PC-9 (cell line): ENCODE measurements at regions of chr2 and their contacts with region 1.

Region 1: DNA sequence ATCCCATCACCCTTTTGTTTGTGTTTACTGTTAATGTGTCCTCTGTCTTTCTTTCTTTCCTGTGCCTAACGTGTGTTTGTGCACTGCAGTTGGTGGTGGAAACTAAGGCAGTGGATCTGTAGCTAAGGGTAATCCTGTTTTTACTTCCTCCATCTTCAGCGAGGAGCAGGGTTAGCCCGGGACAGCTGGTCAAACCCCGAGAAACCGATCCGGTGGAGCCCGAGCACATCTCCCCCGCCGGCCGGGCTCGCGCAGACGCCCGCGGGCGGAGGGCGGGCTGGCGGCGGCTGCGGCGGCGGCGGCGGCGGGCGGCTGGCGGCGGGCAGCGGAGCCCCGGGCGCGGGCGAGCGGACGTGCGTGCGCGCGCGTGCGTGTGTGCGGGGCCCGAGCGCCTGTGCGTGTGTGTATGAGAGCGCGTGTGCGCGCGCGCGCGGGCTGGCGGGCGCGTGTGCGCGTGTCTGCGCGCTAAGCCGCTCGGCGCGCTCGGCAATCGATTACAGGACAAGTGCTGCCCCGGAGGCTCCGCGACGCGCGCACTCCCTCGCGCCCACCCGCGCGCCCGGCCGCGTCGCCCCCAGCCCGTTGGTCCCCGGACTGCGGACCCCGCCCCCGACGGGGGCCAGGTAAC is at the start of gene IKZF2:
- DNase-seq: peak; percentile 45 to 61
- H3K4me3 ChIP-seq: peak within 1 kb of the TSS; percentile 83
- H3K27ac ChIP-seq: peak within 1 kb of the TSS; percentile 86
- H3K4me1 ChIP-seq: peaks cover 32% of the 10 kb centered on the region
- H3K27me3 ChIP-seq: no peaks in the 10 kb centered on the region
- CTCF ChIP-seq: no peak
- total RNA-seq, gene IKZF2: 22.2 and 28.3 TPM in 2 replicates

Region 2: DNA sequence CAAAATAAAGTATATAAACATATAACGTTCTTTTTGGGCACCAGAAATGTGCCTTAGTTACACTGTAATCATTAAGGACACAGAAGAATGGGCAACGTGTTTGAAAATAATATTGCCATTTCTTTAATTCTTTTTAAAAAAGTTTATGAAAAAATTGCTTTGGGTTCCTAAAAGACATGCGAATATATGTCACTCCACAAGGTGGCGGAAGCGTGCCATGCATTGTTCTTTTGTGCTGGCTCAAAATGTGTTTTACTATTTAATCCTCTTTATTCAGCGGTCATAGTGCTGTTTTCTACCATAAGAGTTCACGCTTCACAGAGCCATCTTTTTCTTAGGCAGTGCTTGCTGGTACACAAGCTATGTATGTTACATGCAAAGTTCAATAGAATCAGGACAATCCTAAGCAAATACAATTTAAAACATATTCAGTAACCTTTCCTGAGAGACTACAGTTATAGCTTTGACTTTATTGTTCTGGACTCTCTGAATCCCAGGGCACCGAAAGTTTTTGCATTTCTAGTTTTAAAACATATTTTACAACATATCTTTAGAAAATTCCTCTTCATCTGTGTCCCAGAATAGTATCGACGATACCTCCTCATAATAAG is 465.2 kb before region 1 on chr2:
- CTCF ChIA-PET with region 1: no interaction called
- POLR2A ChIA-PET with region 1: no interaction called
- intact Hi-C with region 1: loop called (anchors 1 kb)
- DNase-seq: peak; percentile 35 to 41
- H3K4me3 ChIP-seq: no peak overlapping the region
- H3K27ac ChIP-seq: no peak overlapping the region
- H3K4me1 ChIP-seq: 0 out of 2 replicates have a peak, but pooled peaks cover 6% of the 10 kb centered on the region
- H3K27me3 ChIP-seq: no peaks in the 10 kb centered on the region
- CTCF ChIP-seq: peak; percentile 85

Region 3: GRCh38 chr2:212863185-212863588 is 288.4 kb before region 1 on chr2:
- CTCF ChIA-PET with region 1: no interaction called
- POLR2A ChIA-PET with region 1: no interaction called
- intact Hi-C with region 1: loop called (anchors 1 kb)
- DNase-seq: peak; percentile 32 to 48
- H3K4me3 ChIP-seq: no peak overlapping the region
- H3K27ac ChIP-seq: no peak overlapping the region
- H3K4me1 ChIP-seq: no peaks in the 10 kb centered on the region
- H3K27me3 ChIP-seq: no peaks in the 10 kb centered on the region
- CTCF ChIP-seq: peak; percentile 69

Region 4: DNA sequence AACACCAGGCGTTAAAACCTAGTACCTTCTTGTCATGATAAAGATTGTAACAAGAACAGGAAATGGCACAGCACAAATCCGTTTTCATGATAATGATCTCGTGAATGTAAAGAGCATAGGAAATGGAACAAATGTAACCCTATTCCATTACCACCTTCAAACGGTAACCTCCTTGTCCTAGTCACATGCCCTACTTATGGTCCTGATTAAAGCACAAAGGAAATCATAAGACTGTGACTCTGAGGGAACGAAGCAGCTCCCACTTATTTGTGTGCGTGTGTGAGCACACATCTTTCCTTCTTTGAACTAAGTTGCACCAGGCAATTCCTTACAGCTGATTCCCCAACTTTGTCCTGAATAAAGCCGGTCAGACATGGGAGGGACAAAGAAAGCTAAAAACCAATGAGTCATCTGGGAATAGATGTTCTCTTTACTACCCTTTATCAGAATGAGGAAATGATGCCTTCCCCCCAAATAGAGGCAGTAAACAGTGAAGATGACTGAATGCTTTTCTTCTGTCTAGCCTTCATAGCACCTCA is 192.7 kb before region 1 on chr2:
- CTCF ChIA-PET with region 1: interaction called, 3 read pairs
- POLR2A ChIA-PET with region 1: interaction called, 9 read pairs
- intact Hi-C with region 1: loop called (anchors 5 kb)
- DNase-seq: peak in 1 of 2 experiments; percentile 50
- H3K4me3 ChIP-seq: no peak overlapping the region
- H3K27ac ChIP-seq: no peak overlapping the region; the same call in 1 of the 2 replicates
- H3K4me1 ChIP-seq: peaks cover 44% of the 10 kb centered on the region
- H3K27me3 ChIP-seq: no peaks in the 10 kb centered on the region
- CTCF ChIP-seq: no peak

Region 5: GRCh38 chr2:213079756-213080155 is 71.8 kb before region 1 on chr2:
- CTCF ChIA-PET with region 1: no interaction called
- POLR2A ChIA-PET with region 1: no interaction called
- intact Hi-C with region 1: loop called (anchors 10 kb)
- DNase-seq: no peak
- H3K4me3 ChIP-seq: no peak overlapping the region
- H3K27ac ChIP-seq: no peak overlapping the region
- H3K4me1 ChIP-seq: no peaks in the 10 kb centered on the region
- H3K27me3 ChIP-seq: no peaks in the 10 kb centered on the region
- CTCF ChIP-seq: no peak

Region 6: GRCh38 chr2:213227458-213227857 is 75.9 kb after region 1 on chr2:
- CTCF ChIA-PET with region 1: no interaction called
- POLR2A ChIA-PET with region 1: no interaction called
- intact Hi-C with region 1: no loop called
- DNase-seq: no peak
- H3K4me3 ChIP-seq: no peak overlapping the region
- H3K27ac ChIP-seq: no peak overlapping the region
- H3K4me1 ChIP-seq: no peaks in the 10 kb centered on the region
- H3K27me3 ChIP-seq: no peaks in the 10 kb centered on the region
- CTCF ChIP-seq: no peak

Region 7: GRCh38 chr2:213238753-213239495 is 87.4 kb after region 1 on chr2:
- CTCF ChIA-PET with region 1: no interaction called
- POLR2A ChIA-PET with region 1: no interaction called
- intact Hi-C with region 1: loop called (anchors 1 kb)
- DNase-seq: peak; percentile 56 to 92
- H3K4me3 ChIP-seq: peak overlapping the region; percentile 24; the same call in 1 of the 2 replicates
- H3K27ac ChIP-seq: peak overlapping the region; percentile 90
- H3K4me1 ChIP-seq: peaks cover 30% of the 10 kb centered on the region
- H3K27me3 ChIP-seq: no peaks in the 10 kb centered on the region
- CTCF ChIP-seq: no peak

Region 8: DNA sequence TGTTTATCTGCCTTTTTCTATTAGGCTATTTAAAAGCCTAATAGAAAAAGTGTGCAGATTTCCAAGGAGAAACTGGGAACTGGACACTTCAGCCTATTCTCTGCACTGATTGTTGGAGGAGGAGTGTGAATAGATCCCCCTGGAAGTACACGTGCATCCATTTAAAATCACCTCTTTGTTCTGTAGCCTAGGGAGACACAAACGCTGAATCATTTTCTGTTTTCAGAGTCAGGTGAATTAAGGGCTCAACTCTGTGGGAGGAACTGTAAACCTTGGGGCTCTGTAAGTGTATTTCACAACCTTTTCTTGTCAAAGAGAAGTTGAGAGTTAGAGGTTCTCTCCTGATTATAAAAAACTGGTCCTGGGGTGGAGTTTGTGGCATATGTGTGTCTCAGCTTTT is 292.4 kb after region 1 on chr2:
- CTCF ChIA-PET with region 1: no interaction called
- POLR2A ChIA-PET with region 1: no interaction called
- intact Hi-C with region 1: no loop called
- DNase-seq: no peak
- H3K4me3 ChIP-seq: no peak overlapping the region
- H3K27ac ChIP-seq: no peak overlapping the region
- H3K4me1 ChIP-seq: no peaks in the 10 kb centered on the region
- H3K27me3 ChIP-seq: no peaks in the 10 kb centered on the region
- CTCF ChIP-seq: no peak